ENCODE measurements at regions of chr5 and their contacts with region 1.

Region 1: GRCh38 chr5:172059661-172060100 is 53.2 kb upstream of the FBXW11 start:
- DNase-seq: peak; percentile 35
- H3K4me3 ChIP-seq: no peak overlapping the region
- H3K27ac ChIP-seq: no peak overlapping the region
- H3K4me1 ChIP-seq: no peaks in the 10 kb centered on the region
- H3K27me3 ChIP-seq: no peaks in the 10 kb centered on the region
- CTCF ChIP-seq: peak; percentile 50 to 61
- POLR2A ChIP-seq: no peak

Region 2: DNA sequence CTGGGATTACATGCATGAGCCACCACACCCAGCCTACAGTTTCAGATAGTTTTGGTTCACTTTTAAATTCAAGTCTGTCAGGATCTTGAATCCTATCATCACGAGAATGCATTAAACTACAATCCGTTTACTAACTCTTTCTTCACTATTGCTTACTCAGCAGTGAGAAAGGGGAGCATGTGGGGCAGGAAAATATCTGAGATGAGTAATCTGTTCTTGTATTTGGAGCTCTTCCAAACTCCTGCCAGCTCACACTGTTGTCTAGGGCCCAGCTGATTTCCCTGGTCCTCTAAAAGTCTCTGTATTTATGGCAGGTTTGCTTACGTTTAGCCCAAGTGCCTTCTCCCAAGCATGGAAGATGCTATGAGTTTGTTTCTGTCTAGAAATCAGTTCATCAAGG is 488.0 kb before region 1 on chr5:
- CTCF ChIA-PET with region 1: no interaction called
- POLR2A ChIA-PET with region 1: no interaction called
- dilution Hi-C with region 1: no loop called
- intact Hi-C with region 1: no loop called
- DNase-seq: peak; percentile 61
- H3K4me3 ChIP-seq: no peak overlapping the region
- H3K27ac ChIP-seq: no peak overlapping the region
- H3K4me1 ChIP-seq: peaks cover 18% of the 10 kb centered on the region
- H3K27me3 ChIP-seq: peaks cover 2 to 3% of the 10 kb centered on the region in 2 experiments
- CTCF ChIP-seq: no peak
- POLR2A ChIP-seq: no peak

Region 3: GRCh38 chr5:171920765-171921391 is 138.8 kb before region 1 on chr5:
- CTCF ChIA-PET with region 1: interaction called, 11 read pairs
- POLR2A ChIA-PET with region 1: no interaction called
- dilution Hi-C with region 1: no loop called
- intact Hi-C with region 1: no loop called
- DNase-seq: no peak
- H3K4me3 ChIP-seq: no peak overlapping the region
- H3K27ac ChIP-seq: no peak overlapping the region
- H3K4me1 ChIP-seq: no peaks in the 10 kb centered on the region
- H3K27me3 ChIP-seq: no peaks in the 10 kb centered on the region
- CTCF ChIP-seq: no peak
- POLR2A ChIP-seq: no peak

Region 4: DNA sequence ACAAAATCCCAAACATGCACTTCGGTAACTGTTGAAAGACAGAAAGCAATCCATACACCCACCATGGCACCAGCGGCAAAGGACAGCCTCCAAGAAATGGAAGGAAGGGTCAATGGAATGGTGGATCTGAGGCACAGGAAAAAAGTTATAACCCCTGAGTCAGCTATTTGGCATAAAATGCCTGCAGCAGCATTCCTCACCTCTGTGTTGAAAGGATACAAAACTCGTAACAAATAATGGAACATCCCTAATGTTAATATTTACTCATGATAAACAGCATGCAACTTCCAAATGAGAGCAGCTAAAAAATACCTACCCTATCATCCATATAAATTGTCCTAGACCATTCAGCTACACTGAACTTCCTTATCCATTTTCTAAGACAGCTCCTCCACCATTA is 62.7 kb before region 1 on chr5:
- CTCF ChIA-PET with region 1: no interaction called
- POLR2A ChIA-PET with region 1: no interaction called
- dilution Hi-C with region 1: no loop called
- intact Hi-C with region 1: no loop called
- DNase-seq: no peak
- H3K4me3 ChIP-seq: no peak overlapping the region
- H3K27ac ChIP-seq: no peak overlapping the region
- H3K4me1 ChIP-seq: no peaks in the 10 kb centered on the region
- H3K27me3 ChIP-seq: no peaks in the 10 kb centered on the region
- CTCF ChIP-seq: no peak
- POLR2A ChIP-seq: no peak

Region 5: GRCh38 chr5:172015346-172015745 is 44.3 kb before region 1 on chr5:
- CTCF ChIA-PET with region 1: interaction called, 23 read pairs
- POLR2A ChIA-PET with region 1: no interaction called
- dilution Hi-C with region 1: no loop called
- intact Hi-C with region 1: no loop called
- DNase-seq: no peak
- H3K4me3 ChIP-seq: no peak overlapping the region
- H3K27ac ChIP-seq: no peak overlapping the region
- H3K4me1 ChIP-seq: no peaks in the 10 kb centered on the region
- H3K27me3 ChIP-seq: peaks cover 0 to 3% of the 10 kb centered on the region in 2 experiments
- CTCF ChIP-seq: no peak
- POLR2A ChIP-seq: no peak

Region 6: GRCh38 chr5:172071289-172071875 is 11.7 kb after region 1 on chr5:
- CTCF ChIA-PET with region 1: interaction called, 14 read pairs
- POLR2A ChIA-PET with region 1: no interaction called
- dilution Hi-C with region 1: no loop called
- intact Hi-C with region 1: no loop called
- DNase-seq: no peak
- H3K4me3 ChIP-seq: no peak overlapping the region
- H3K27ac ChIP-seq: no peak overlapping the region
- H3K4me1 ChIP-seq: no peaks in the 10 kb centered on the region
- H3K27me3 ChIP-seq: no peaks in the 10 kb centered on the region
- CTCF ChIP-seq: no peak
- POLR2A ChIP-seq: no peak

Region 7: DNA sequence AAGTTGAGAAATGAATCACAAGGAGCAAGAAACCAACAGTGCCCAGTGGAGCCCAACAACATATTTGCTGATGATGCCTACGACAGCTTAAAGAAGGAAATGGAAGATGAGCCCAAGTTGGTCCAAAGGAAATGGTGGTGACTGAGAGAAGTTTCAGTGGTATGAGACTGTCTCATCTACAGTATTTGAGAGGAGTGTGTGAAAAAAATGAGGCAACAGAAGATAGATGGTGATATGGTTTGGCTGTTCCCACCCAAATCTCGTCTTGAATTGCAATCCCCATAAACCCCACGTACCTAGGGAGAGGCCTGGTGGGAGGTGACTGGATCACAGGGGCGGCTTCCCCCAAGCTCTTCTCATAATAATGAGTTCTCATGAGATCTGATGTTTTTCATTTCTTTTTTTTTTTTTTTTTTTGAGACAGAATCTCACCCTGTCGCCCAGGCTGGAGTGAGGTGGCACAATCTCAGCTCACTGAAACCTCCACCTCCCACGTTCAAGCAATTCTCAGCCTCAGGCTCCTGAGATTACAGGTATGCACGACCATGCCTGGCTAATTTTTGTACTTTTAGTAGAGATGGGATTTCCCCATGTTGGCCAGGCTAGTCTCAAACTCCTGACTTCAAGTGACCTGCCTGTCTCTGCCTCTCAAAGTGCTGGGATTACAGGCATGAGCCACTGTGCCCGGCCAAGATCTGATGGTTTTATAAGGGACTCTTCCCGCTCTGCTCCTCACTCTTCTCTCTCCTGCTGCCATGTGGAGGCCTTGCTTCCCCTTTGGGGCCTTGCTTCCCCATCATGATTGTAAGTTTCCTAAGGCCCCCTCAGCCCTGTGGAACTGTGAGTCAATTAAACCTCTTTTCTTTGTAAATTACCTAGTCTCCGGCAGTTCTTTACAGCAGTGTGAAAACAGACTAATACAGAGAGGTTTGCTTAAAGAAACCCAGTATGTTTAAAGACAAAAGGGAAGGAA is 164.5 kb after region 1 on chr5:
- CTCF ChIA-PET with region 1: no interaction called
- POLR2A ChIA-PET with region 1: no interaction called
- dilution Hi-C with region 1: no loop called
- intact Hi-C with region 1: no loop called
- DNase-seq: no peak
- H3K4me3 ChIP-seq: no peak overlapping the region
- H3K27ac ChIP-seq: no peak overlapping the region
- H3K4me1 ChIP-seq: no peaks in the 10 kb centered on the region
- H3K27me3 ChIP-seq: no peaks in the 10 kb centered on the region
- CTCF ChIP-seq: no peak
- POLR2A ChIP-seq: no peak

Region 8: GRCh38 chr5:172293054-172293744 is 233.5 kb after region 1 on chr5:
- CTCF ChIA-PET with region 1: interaction called, 10 read pairs
- POLR2A ChIA-PET with region 1: no interaction called
- dilution Hi-C with region 1: no loop called
- intact Hi-C with region 1: loop called (anchors 2 kb)
- DNase-seq: peak; percentile 63
- H3K4me3 ChIP-seq: no peak overlapping the region
- H3K27ac ChIP-seq: no peak overlapping the region
- H3K4me1 ChIP-seq: no peaks in the 10 kb centered on the region
- H3K27me3 ChIP-seq: peaks cover 2 to 7% of the 10 kb centered on the region in 2 experiments
- CTCF ChIP-seq: peak; percentile 81 to 87
- POLR2A ChIP-seq: no peak

Measured in endothelial cell of umbilical vein (primary cell).